Spleen (tissue), 13 donors: ENCODE measurements at regions of chr15 and their contacts with region 1.

Region 1: DNA sequence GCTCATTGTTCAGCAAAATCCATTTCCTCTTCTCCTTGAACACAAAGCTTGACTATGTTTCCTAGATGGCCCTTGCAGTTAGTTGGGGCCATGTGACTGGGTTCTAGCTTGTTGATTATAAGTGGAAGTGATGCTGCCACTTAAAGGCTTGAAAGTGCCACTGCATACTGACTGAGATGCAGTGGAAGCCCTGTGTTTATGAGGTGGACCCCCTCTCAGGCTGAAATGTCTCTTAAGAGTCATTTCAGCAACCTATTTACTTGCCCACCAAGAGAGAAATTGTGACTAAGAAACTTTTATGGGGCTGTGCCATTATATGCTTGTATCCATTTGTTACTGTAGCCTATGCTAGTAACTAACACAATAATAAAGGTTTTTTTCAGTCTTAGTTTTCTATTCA is 8.4 kb upstream of the ANP32A start:
- DNase-seq: no peak
- H3K4me3 ChIP-seq: no peak overlapping the region
- H3K27ac ChIP-seq: no peak overlapping the region
- H3K4me1 ChIP-seq: peaks cover 0 to 10% (median 2%) of the 10 kb centered on the region in 6 donors
- H3K27me3 ChIP-seq: peaks cover 0 to 5% (median 0%) of the 10 kb centered on the region in 7 donors
- CTCF ChIP-seq: peak; percentile 43 to 82 (median 65)
- POLR2A ChIP-seq: no peak

Region 2: DNA sequence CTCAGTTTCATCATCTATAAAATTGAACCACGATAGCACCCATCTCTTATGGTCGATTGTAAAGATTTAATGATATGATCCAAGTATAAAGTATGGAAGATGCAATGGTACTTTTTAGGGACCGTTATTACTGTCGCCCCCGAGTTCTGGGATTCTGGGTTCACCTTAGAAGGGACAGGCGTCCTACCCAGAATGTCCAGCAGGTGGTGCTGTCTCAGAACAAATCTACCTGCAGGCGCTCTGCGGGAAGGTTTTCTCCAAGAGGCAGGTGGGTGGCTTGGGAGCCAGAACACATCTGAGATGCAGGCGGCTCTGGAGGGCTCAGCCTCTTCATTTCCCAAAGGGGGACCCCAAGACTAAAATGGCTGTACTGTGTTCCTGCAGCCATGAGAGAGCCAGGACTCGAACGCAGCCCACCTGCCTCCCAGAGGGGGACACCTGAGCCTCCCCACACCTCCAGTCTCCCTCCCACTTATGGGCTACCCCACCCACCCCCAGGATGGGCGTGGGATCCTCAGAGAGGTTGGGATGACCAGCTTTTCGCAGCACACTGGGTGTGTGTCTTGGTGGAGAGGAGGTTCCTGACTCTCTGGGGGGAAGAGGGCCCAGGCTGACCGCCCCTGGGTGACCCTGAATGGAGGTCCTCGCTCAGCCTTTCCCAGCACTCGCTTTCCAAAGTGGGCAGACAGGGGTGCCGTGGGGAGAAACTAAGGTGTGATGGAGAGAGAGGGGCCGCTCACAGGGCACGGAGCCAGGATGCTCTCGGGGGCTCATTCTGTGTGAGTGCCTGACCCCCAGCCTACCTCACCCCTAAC is 278.4 kb before region 1 on chr15:
- intact Hi-C with region 1: no loop called
- DNase-seq: peak; percentile 87
- H3K4me3 ChIP-seq: no peak overlapping the region
- H3K27ac ChIP-seq: no peak overlapping the region
- H3K4me1 ChIP-seq: peaks cover 0 to 5% (median 0%) of the 10 kb centered on the region in 6 donors
- H3K27me3 ChIP-seq: peaks cover 0 to 54% (median 2%) of the 10 kb centered on the region in 7 donors
- CTCF ChIP-seq: peak; percentile 74 to 96 (median 90)
- POLR2A ChIP-seq: no peak

Region 3: GRCh38 chr15:68566377-68566954 is 262.6 kb before region 1 on chr15:
- intact Hi-C with region 1: no loop called
- DNase-seq: peak; percentile 51
- H3K4me3 ChIP-seq: no peak overlapping the region
- H3K27ac ChIP-seq: no peak overlapping the region
- H3K4me1 ChIP-seq: no peaks in the 10 kb centered on the region
- H3K27me3 ChIP-seq: peaks cover 0 to 31% (median 0%) of the 10 kb centered on the region in 7 donors
- CTCF ChIP-seq: no peak
- POLR2A ChIP-seq: no peak

Region 4: GRCh38 chr15:68783226-68784058 is 45.6 kb before region 1 on chr15:
- intact Hi-C with region 1: loop called (anchors 5 kb)
- DNase-seq: peak; percentile 89
- H3K4me3 ChIP-seq: peak overlapping the region in 1 of 8 donors; percentile 58
- H3K27ac ChIP-seq: peak overlapping the region in 6 of 8 donors; percentile 82 to 94 (median 90)
- H3K4me1 ChIP-seq: peaks cover 10 to 86% (median 41%) of the 10 kb centered on the region in 6 donors
- H3K27me3 ChIP-seq: no peaks in the 10 kb centered on the region
- CTCF ChIP-seq: peak; percentile 42 to 84 (median 67)
- POLR2A ChIP-seq: no peak

Region 5: GRCh38 chr15:68875377-68876116 is 46.5 kb after region 1 on chr15:
- intact Hi-C with region 1: no loop called
- DNase-seq: peak; percentile 98
- H3K4me3 ChIP-seq: peak overlapping the region in 4 of 8 donors; percentile 5 to 49 (median 24)
- H3K27ac ChIP-seq: no peak overlapping the region
- H3K4me1 ChIP-seq: peaks cover 0 to 10% (median 4%) of the 10 kb centered on the region in 6 donors
- H3K27me3 ChIP-seq: peaks cover 0 to 26% (median 2%) of the 10 kb centered on the region in 7 donors
- CTCF ChIP-seq: peak; percentile 81 to 95 (median 92)
- POLR2A ChIP-seq: no peak